A673 (cell line): ENCODE measurements at regions of chr11 and their contacts with region 1.

Region 1: GRCh38 chr11:82494988-82495432 is 238.7 kb downstream of the FAM181B start:
- DNase-seq: peak; percentile 45
- H3K4me3 ChIP-seq: no peak overlapping the region
- H3K27ac ChIP-seq: no peak overlapping the region
- H3K4me1 ChIP-seq: no peaks in the 10 kb centered on the region
- H3K27me3 ChIP-seq: no peaks in the 10 kb centered on the region
- CTCF ChIP-seq: peak; percentile 73

Region 2: DNA sequence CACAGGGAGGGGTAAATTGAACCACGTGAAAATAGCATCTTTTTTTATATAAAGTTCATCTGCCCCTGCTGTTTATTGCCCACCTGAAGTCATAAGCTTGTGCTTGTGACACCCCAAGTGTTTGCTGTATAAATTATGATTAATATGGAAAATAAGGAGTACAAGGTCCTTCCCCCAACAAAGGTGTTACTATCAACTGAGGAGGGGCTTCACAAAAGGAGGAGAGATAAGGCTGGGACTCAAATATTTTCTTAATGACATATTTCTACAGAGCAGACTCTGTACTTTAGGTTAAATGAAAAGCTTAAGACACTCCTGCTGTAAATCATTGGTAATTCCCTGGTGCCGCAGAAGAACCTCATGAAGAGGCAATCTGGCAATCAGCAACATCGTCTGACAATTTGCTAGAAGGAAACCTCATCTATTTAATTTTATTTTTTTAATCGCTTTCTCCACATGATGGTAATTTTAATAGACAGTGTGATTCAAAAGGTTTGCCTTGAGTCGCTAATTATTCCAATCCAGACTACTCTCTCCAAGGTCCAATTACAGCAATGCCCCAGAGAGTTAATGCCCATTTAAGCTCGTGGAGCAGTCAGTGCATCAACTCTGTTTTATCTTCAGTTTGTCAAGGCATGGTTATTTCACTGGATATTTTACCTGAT is 1193.7 kb before region 1 on chr11:
- CTCF ChIA-PET with region 1: no interaction called
- POLR2A ChIA-PET with region 1: no interaction called
- intact Hi-C with region 1: loop called (anchors 10 kb)
- DNase-seq: peak; percentile 53
- H3K4me3 ChIP-seq: no peak overlapping the region
- H3K27ac ChIP-seq: no peak overlapping the region
- H3K4me1 ChIP-seq: no peaks in the 10 kb centered on the region
- H3K27me3 ChIP-seq: no peaks in the 10 kb centered on the region
- CTCF ChIP-seq: no peak

Region 3: GRCh38 chr11:82326853-82327252 is 168.2 kb before region 1 on chr11:
- CTCF ChIA-PET with region 1: no interaction called
- POLR2A ChIA-PET with region 1: no interaction called
- intact Hi-C with region 1: no loop called
- DNase-seq: no peak
- H3K4me3 ChIP-seq: no peak overlapping the region
- H3K27ac ChIP-seq: no peak overlapping the region
- H3K4me1 ChIP-seq: no peaks in the 10 kb centered on the region
- H3K27me3 ChIP-seq: no peaks in the 10 kb centered on the region
- CTCF ChIP-seq: no peak